Left ventricle myocardium superior (tissue), 1 donor: ENCODE measurements at regions of chr17 and their contacts with region 1.

Region 1: DNA sequence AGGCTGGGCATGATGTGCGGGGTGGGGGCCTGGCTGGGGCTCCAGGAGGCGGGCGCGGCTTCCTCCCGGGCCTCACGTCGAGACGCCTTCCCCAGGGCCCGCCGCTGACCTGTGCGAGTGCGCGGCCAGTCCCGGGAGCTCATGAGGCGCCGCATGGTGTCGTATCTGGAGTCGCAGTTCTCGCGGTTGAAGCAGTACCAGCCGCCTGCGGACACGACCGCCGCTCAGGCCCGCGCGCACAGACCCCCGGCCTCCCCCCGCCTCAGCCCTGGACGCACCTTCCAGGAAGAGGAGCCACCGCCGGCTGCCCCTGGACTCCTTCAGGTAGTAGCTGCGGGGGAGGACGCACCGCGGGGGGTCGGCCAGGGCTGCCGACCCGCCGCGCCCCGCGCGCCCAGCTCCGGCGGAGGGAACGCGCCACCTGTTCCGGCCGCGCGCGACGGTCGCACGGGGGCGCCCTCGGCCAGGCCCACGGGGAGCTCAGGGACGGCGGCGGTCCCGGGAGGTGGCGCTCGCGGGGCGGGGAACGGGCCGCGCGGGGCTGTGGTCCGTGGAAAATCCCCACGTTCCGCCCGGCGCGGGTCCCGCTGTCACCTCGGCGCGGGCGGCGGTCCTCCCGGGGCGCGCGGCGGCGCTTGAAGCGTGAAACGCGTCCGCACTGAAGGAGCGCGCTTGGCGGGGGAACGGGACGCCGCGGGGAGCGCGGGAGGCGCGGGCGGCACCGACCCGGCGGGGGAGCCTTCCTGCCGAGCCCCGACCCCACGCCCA is 1.4 kb downstream of the NOTUM start:
- DNase-seq: peak; percentile 89
- ATAC-seq: peak; percentile 90

Region 2: DNA sequence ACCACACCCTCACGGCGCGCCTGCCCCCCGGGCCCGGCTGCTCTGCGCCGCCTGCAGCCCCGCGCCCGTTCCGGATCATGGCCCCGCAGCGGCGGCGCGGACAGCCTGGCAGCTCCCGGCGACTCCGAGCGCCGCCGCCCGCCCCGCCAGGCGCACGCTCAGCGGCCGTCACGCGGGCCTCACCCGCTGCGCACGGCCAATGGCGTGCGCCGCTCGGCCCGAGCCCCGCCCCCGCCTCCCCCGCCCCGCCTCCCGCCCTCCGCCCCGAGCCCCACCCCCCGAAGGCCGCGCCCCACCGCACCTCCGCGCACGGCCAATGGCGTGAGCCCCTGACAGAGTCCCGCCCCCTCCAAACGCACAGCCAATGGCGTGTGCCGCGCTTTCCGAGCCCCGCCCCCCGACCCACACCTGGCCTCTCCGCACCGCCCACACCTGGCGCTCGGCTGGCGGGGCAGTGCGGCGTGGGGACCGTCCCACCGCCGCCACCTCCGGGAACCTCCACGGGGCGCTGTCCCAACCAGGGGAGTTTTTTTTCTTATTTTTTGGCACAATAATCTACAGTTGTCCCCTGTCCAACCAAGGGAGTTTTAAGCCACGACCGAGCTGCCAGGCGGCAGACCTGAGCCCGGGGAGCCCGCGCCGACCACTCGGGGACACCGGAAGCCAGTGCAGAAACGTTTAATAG is 48.1 kb before region 1 on chr17 and contains the start of gene PCYT2:
- intact Hi-C with region 1: no loop called
- DNase-seq: peak; percentile 94
- ATAC-seq: peak; percentile 94
- total RNA-seq, gene PCYT2: 28.4 TPM

Region 3: DNA sequence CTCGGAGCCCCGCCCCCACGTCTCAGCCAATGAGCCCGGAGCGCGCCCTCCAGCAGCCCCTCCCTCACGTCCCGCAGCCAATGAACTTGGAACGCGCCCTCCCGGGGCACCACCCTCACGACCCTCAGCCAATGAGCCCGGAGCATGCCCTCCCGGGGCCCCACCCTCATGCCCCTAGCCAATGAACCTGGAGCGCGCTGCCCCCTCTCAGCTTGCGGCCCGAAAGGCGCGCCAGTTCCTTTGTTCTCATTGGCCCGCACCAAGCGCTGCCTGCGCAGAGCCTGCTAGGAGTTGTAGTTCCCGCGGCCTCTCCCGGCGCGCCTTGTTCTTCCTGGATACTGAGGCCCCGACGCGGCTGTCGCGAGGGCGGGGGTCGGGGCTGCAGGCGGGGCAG is 63.4 kb after region 1 on chr17 and contains the start of gene LRRC45:
- intact Hi-C with region 1: loop called (anchors 10 kb)
- DNase-seq: peak; percentile 100
- ATAC-seq: peak; percentile 94
- total RNA-seq, gene LRRC45: 6.3 TPM